ENCODE measurements at regions of chr20 and their contacts with region 1.

Region 1: GRCh38 chr20:58650776-58651558 is at the start of gene STX16:
- DNase-seq: peak; percentile 67
- ATAC-seq: peak; percentile 94
- H3K4me3 ChIP-seq: peak within 1 kb of the TSS; percentile 85 to 97
- H3K27ac ChIP-seq: peak within 1 kb of the TSS; percentile 97
- H3K4me1 ChIP-seq: peaks cover 19% of the 10 kb centered on the region; the same call in 1 of the 2 replicates
- H3K27me3 ChIP-seq: no peaks in the 10 kb centered on the region
- CTCF ChIP-seq: peak; percentile 78
- total RNA-seq, gene STX16: 41.9 TPM

Region 2: DNA sequence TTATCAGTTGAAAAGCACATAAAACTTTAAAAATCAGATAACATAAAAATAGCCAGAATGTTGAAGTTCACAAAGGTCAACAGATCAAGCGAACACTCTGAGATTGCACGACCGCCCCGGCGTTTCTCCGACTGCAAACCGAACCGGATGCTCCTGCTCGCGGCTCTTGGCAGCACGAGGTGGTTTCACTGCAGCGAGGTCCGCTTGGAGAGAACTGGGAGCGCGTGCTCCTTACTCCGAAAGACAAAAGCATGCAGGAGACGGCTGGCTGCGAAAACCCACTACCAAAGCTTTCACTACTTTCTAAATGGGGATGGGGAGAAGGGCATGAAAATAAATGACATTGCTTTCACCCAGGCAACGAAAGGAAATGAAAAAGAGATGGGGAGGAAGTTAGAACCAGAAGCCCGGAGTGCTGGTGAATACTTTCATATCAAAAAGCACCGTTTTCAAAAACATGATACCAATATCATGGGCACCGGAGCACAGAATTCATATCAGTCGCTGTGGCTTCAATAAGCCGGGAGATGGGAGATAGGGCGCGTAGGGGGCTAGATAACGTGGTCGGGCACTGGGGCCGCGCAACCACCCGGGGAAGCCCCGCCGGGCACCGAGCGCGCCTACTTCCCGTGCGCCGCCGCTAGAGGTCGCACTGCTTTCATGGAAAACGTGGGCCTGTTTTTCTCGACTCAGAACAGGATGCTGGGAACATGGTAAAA is 414.2 kb before region 1 on chr20:
- CTCF ChIA-PET with region 1: no interaction called
- POLR2A ChIA-PET with region 1: no interaction called
- in situ Hi-C with region 1: no loop called
- intact Hi-C with region 1: loop called (anchors 5 kb)
- DNase-seq: peak; percentile 47
- ATAC-seq: peak; percentile 95
- H3K4me3 ChIP-seq: peak overlapping the region; percentile 47 to 69
- H3K27ac ChIP-seq: peak overlapping the region; percentile 67
- H3K4me1 ChIP-seq: peaks cover 6% of the 10 kb centered on the region
- H3K27me3 ChIP-seq: no peaks in the 10 kb centered on the region
- CTCF ChIP-seq: peak; percentile 97

Region 3: GRCh38 chr20:58512808-58513552 is 138.0 kb before region 1 on chr20:
- CTCF ChIA-PET with region 1: interaction called, 14 read pairs
- POLR2A ChIA-PET with region 1: no interaction called
- in situ Hi-C with region 1: no loop called
- intact Hi-C with region 1: no loop called
- DNase-seq: no peak
- ATAC-seq: peak; percentile 46; the same call in 1 of the 2 replicates
- H3K4me3 ChIP-seq: no peak overlapping the region
- H3K27ac ChIP-seq: no peak overlapping the region
- H3K4me1 ChIP-seq: no peaks in the 10 kb centered on the region
- H3K27me3 ChIP-seq: peaks cover 4% of the 10 kb centered on the region; the same call in 1 of the 2 replicates
- CTCF ChIP-seq: no peak

Region 4: GRCh38 chr20:58839474-58839874 is 188.5 kb after region 1 on chr20:
- CTCF ChIA-PET with region 1: no interaction called
- POLR2A ChIA-PET with region 1: no interaction called
- in situ Hi-C with region 1: no loop called
- intact Hi-C with region 1: loop called (anchors 2 kb)
- DNase-seq: no peak
- ATAC-seq: peak; percentile 88
- H3K4me3 ChIP-seq: peak overlapping the region; percentile 36 to 55
- H3K27ac ChIP-seq: no peak overlapping the region
- H3K4me1 ChIP-seq: peaks cover 18% of the 10 kb centered on the region
- H3K27me3 ChIP-seq: peaks cover 45% of the 10 kb centered on the region
- CTCF ChIP-seq: peak; percentile 85